Dendritic cell treated with granulocyte-macrophage colony-stimulating factor and Interleukin-4, amounts not matched to agents 40 ng/mL and 50 ng/mL, for 4 days (primary cell): ENCODE measurements at regions of chr7 and their contacts with region 1.

Region 1: DNA sequence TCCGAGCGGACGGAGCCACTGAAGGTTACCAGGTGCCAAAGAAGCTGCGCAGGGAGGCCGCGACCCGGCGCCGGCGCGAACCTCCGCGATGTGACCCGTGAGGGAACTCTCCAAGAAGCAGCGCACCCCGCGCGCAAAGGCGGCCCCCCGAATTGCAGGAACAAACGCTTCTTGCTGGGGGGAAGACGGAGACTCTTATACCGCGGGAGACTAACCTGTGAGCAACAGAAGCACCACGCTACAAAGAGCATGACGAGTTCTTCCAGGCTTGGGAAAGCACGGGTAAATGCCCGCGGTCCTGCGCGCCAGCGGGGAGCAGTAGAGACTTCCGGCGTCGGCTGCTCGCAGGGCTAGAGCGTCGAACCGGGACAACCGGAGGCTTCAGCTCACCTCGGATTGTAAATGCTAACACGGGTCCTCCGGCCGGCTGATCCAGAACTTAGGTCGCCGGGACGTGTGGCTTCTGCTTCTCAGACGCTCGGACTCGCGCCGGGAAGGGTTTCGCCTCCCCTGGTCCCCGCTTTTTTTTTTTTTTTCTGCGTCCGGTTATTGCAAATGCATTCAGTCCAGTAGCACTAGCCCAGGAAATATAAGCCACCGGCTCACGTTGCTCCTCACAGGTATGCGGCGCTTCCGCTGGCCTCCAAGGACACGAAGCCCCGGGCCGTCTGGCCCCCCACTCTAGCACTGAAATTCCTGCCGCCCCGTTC is at the start of gene COA1:
- H3K4me3 Mint-ChIP-seq: peak within 1 kb of the TSS; percentile 93
- H3K27ac Mint-ChIP-seq: peak within 1 kb of the TSS; percentile 87
- H3K4me1 Mint-ChIP-seq: peaks cover 38% of the 10 kb centered on the region
- H3K27me3 Mint-ChIP-seq: no peaks in the 10 kb centered on the region

Region 2: GRCh38 chr7:42931834-42932651 is 797.3 kb before region 1 on chr7 and contains the starts of genes MRPL32 and PSMA2:
- intact Hi-C with region 1: loop called (anchors 10 kb)
- H3K4me3 Mint-ChIP-seq: peak within 1 kb of the TSS; percentile 99
- H3K27ac Mint-ChIP-seq: peak within 1 kb of the TSS; percentile 95
- H3K4me1 Mint-ChIP-seq: peaks cover 35% of the 10 kb centered on the region
- H3K27me3 Mint-ChIP-seq: no peaks in the 10 kb centered on the region

Region 3: DNA sequence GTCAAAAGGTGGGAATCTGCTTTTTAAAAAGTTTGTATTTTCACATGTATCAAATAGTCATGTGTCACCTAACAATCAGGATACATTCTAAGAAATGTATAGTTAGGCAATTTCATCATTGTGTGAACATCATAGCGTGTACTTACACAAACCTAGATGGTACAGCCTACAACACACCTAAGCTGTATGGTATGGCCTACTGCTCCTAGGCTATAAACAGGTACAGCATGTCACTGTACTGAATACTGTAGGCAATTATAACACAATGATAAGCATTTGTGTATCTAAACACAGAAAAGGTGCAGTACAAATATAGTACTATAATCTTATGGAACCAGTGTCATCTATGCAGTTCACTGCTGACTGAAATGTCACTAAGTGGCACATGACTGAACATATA is 17.9 kb before region 1 on chr7:
- intact Hi-C with region 1: no loop called
- H3K4me3 Mint-ChIP-seq: no peak overlapping the region
- H3K27ac Mint-ChIP-seq: no peak overlapping the region
- H3K4me1 Mint-ChIP-seq: peaks cover 11% of the 10 kb centered on the region
- H3K27me3 Mint-ChIP-seq: no peaks in the 10 kb centered on the region

Region 4: GRCh38 chr7:43756368-43757072 is 27.2 kb after region 1 on chr7:
- intact Hi-C with region 1: loop called (anchors 2 kb)
- H3K4me3 Mint-ChIP-seq: peak overlapping the region; percentile 49
- H3K27ac Mint-ChIP-seq: peak overlapping the region; percentile 92
- H3K4me1 Mint-ChIP-seq: peaks cover 63% of the 10 kb centered on the region
- H3K27me3 Mint-ChIP-seq: peaks cover 1% of the 10 kb centered on the region